ENCODE measurements at regions of chr2 and their contacts with region 1.

Region 1: DNA sequence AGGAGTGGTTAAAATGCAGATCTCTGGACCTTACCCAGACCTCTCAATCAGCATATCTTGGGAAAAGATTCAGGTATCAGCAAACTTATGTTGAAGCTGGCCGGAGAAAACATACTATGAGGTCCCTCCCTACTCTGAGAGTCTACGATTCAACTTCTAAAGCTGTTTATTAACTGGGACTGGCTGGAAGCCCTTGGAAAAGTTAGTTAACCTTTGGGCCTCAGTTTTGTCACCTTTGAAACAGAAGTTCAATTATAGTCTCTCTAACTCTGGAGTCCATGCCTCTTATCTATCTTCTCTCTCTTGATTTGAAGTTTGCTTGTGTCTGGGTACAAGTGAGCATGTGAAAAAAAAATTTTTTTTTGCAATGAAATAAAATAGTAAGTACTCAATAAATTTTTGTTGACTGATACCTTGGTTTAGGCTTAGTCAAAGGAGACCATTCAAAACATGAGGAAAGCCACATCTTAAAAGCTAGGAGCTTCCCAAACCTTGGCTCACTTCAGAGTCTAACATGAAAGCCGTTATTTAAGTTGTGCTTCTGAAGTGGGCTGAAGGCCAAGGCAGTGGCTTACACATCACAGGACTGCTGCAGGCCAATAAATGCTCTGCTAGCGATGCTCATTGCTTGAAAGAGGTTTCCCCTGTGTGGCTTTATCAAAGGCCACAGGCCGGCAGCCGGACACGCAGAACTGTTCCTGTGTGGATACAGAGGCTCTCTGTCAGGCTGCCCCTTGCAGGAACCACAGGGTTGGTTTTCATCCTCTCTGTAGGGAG is 110.6 kb upstream of the FAM136A start:
- DNase-seq: no peak
- ATAC-seq: no peak
- H3K4me3 ChIP-seq: no peak overlapping the region
- H3K4me3 Mint-ChIP-seq: no peak overlapping the region
- H3K27ac ChIP-seq: no peak overlapping the region
- H3K27ac Mint-ChIP-seq: no peak overlapping the region
- H3K4me1 ChIP-seq: no peaks in the 10 kb centered on the region
- H3K4me1 Mint-ChIP-seq: no peaks in the 10 kb centered on the region
- H3K27me3 ChIP-seq: peaks cover 0 to 4% of the 10 kb centered on the region in 2 experiments
- H3K27me3 Mint-ChIP-seq: no peaks in the 10 kb centered on the region

Region 2: GRCh38 chr2:70391988-70392387 is 20.5 kb before region 1 on chr2:
- CTCF ChIA-PET with region 1: no interaction called
- POLR2A ChIA-PET with region 1: interaction called in 1 of 2 experiments, 20 read pairs
- DNase-seq: no peak
- ATAC-seq: no peak
- H3K4me3 ChIP-seq: no peak overlapping the region
- H3K4me3 Mint-ChIP-seq: no peak overlapping the region
- H3K27ac ChIP-seq: no peak overlapping the region
- H3K27ac Mint-ChIP-seq: no peak overlapping the region
- H3K4me1 ChIP-seq: no peaks in the 10 kb centered on the region
- H3K4me1 Mint-ChIP-seq: no peaks in the 10 kb centered on the region
- H3K27me3 ChIP-seq: no peaks in the 10 kb centered on the region
- H3K27me3 Mint-ChIP-seq: peaks cover 2 to 3% of the 10 kb centered on the region in 2 donors

Measured in T-cell (primary cell).